IMR-90 (cell line): ENCODE measurements at regions of chr22 and their contacts with region 1.

Region 1: DNA sequence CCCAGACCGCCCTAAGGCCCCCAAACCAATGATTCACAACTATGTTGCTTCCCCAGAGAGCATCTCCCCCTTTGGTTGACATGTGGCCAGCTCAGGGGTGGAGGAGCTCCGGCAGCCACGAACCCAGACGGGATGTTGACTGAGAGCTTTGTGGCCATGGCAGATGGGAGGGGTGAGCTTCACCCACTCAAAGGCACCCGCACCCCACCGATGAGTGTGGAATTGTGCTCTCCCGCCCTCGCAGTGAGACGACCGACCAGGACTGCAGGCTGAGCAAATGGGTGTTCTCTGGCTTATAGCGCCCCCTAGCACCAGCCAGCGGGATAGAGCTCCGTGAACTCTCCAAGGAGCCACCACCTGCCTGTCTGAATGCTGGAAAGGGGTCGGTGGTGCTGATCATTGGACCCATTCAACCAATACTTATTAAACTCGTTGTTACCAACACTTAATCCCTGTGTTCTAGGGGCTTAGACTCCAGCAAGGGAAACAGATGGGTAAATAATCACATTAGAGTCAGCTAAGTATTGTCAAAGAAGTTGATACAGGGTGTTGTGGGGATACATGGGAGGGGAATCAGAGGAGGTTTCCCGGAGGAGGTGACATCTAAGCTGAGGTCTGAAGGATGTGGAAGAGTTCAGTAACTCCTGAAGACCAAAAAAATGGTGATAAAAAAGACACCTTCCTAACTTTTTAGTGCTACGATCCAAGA is 4.5 kb upstream of the TIMP3 start:
- DNase-seq: peak; percentile 83
- ATAC-seq: peak; percentile 55
- H3K4me3 ChIP-seq: no peak overlapping the region
- H3K27ac ChIP-seq: peak overlapping the region; percentile 9
- H3K4me1 ChIP-seq: peaks cover 10% of the 10 kb centered on the region
- H3K27me3 ChIP-seq: no peaks in the 10 kb centered on the region
- CTCF ChIP-seq: peak; percentile 95
- POLR2A ChIP-seq: 0 out of 2 replicates have a peak, but pooled peaks have one; percentile 52
- RAD21 ChIP-seq: peak; percentile 98

Region 2: GRCh38 chr22:31970490-31971444 is 826.3 kb before region 1 on chr22:
- CTCF ChIA-PET with region 1: no interaction called
- POLR2A ChIA-PET with region 1: no interaction called
- dilution Hi-C with region 1: no loop called
- in situ Hi-C with region 1: loop called (anchors 25 kb)
- intact Hi-C with region 1: no loop called
- DNase-seq: peak; percentile 51
- ATAC-seq: peak; percentile 99
- H3K4me3 ChIP-seq: peak overlapping the region; percentile 47
- H3K27ac ChIP-seq: no peak overlapping the region
- H3K4me1 ChIP-seq: no peaks in the 10 kb centered on the region
- H3K27me3 ChIP-seq: no peaks in the 10 kb centered on the region; the same call in 1 of the 2 replicates
- CTCF ChIP-seq: peak; percentile 91
- POLR2A ChIP-seq: no peak
- RAD21 ChIP-seq: peak; percentile 74

Region 3: DNA sequence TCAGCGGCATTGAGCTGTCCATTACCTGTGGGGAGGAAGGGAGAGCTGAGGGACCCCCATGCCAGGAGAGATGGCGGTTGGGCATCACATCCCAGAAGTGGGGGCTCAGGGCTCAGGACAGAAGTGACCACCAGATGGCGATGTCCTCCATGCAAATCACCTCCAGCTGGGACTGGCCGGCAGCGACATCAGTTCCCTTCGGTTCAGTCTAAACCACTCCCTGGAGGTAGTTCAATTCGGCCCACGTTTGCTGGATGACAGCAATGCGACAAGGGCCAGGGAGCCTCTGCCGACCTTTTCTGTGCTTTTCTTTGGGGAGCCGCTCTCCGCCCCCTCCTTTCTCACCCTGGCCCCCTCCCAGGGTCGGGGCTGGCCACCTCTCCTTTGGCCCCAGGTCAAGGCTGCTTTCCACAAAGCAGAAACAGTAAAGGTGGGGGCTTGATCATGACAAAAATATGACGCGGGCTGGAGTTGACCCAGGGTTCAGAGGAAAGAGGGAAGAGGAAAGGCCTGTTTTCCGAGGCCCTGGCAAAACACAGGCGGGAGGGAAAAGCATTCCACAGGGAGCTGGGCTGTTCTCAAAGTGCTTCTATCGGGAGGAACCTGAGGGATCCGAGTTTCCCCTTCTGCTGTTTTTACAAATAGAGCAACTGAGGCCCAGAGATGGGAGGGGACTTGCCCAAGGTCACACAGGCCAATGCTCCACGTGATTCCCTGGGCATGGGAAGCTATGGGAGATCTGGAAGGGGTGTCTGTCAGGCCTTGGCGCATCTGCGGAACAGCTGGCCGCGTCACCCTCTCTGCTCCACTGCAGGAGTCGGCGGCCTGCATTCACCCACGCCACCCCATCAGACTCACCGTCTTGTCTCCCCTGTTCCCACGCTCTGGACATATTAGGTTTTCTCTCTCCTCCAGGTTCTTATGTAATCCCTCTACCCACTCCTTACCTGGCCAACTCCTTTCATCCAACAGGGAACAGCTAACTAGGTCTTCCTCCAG is 267.7 kb before region 1 on chr22:
- CTCF ChIA-PET with region 1: interaction called, 36 read pairs
- POLR2A ChIA-PET with region 1: interaction called, 3 read pairs
- dilution Hi-C with region 1: no loop called
- in situ Hi-C with region 1: loop called (anchors 5 kb)
- intact Hi-C with region 1: loop called (anchors 1 kb)
- DNase-seq: peak; percentile 86
- ATAC-seq: peak; percentile 78
- H3K4me3 ChIP-seq: no peak overlapping the region
- H3K27ac ChIP-seq: peak overlapping the region; percentile 1; the same call in 1 of the 2 replicates
- H3K4me1 ChIP-seq: peaks cover 23% of the 10 kb centered on the region
- H3K27me3 ChIP-seq: no peaks in the 10 kb centered on the region
- CTCF ChIP-seq: peak; percentile 95
- POLR2A ChIP-seq: peak; percentile 67
- RAD21 ChIP-seq: peak; percentile 100

Region 4: GRCh38 chr22:32628628-32629572 is 168.1 kb before region 1 on chr22:
- CTCF ChIA-PET with region 1: interaction called, 14 read pairs
- POLR2A ChIA-PET with region 1: interaction called, 4 read pairs
- dilution Hi-C with region 1: no loop called
- in situ Hi-C with region 1: no loop called
- intact Hi-C with region 1: loop called (anchors 1 kb)
- DNase-seq: peak; percentile 97
- ATAC-seq: peak; percentile 86
- H3K4me3 ChIP-seq: no peak overlapping the region
- H3K27ac ChIP-seq: peak overlapping the region; percentile 100
- H3K4me1 ChIP-seq: peaks cover 24% of the 10 kb centered on the region
- H3K27me3 ChIP-seq: no peaks in the 10 kb centered on the region
- CTCF ChIP-seq: no peak
- POLR2A ChIP-seq: no peak
- RAD21 ChIP-seq: no peak

Region 5: GRCh38 chr22:32660292-32660691 is 136.7 kb before region 1 on chr22:
- CTCF ChIA-PET with region 1: interaction called, 54 read pairs
- POLR2A ChIA-PET with region 1: interaction called, 3 read pairs
- dilution Hi-C with region 1: no loop called
- in situ Hi-C with region 1: no loop called
- intact Hi-C with region 1: loop called (anchors 1 kb)
- DNase-seq: peak; percentile 70
- ATAC-seq: peak; percentile 23; the same call in 1 of the 2 replicates
- H3K4me3 ChIP-seq: no peak overlapping the region
- H3K27ac ChIP-seq: no peak overlapping the region
- H3K4me1 ChIP-seq: peaks cover 14% of the 10 kb centered on the region
- H3K27me3 ChIP-seq: no peaks in the 10 kb centered on the region
- CTCF ChIP-seq: peak; percentile 70
- POLR2A ChIP-seq: no peak
- RAD21 ChIP-seq: peak; percentile 88

Region 6: GRCh38 chr22:32717337-32718240 is 79.4 kb before region 1 on chr22:
- CTCF ChIA-PET with region 1: interaction called, 7 read pairs
- POLR2A ChIA-PET with region 1: no interaction called
- dilution Hi-C with region 1: no loop called
- in situ Hi-C with region 1: no loop called
- intact Hi-C with region 1: loop called (anchors 5 kb)
- DNase-seq: peak; percentile 84
- ATAC-seq: peak; percentile 81
- H3K4me3 ChIP-seq: no peak overlapping the region
- H3K27ac ChIP-seq: peak overlapping the region; percentile 76
- H3K4me1 ChIP-seq: peaks cover 22% of the 10 kb centered on the region
- H3K27me3 ChIP-seq: no peaks in the 10 kb centered on the region
- CTCF ChIP-seq: no peak
- POLR2A ChIP-seq: no peak
- RAD21 ChIP-seq: no peak